ENCODE measurements at regions of chr1 and their contacts with region 1.

Region 1: GRCh38 chr1:110460253-110461220 is 9.6 kb downstream of the PROK1 start:
- DNase-seq: peak; percentile 23
- H3K4me3 ChIP-seq: no peak overlapping the region
- H3K27me3 ChIP-seq: no peaks in the 10 kb centered on the region; the same call in 1 of the 2 replicates
- CTCF ChIP-seq: peak; percentile 92

Region 2: DNA sequence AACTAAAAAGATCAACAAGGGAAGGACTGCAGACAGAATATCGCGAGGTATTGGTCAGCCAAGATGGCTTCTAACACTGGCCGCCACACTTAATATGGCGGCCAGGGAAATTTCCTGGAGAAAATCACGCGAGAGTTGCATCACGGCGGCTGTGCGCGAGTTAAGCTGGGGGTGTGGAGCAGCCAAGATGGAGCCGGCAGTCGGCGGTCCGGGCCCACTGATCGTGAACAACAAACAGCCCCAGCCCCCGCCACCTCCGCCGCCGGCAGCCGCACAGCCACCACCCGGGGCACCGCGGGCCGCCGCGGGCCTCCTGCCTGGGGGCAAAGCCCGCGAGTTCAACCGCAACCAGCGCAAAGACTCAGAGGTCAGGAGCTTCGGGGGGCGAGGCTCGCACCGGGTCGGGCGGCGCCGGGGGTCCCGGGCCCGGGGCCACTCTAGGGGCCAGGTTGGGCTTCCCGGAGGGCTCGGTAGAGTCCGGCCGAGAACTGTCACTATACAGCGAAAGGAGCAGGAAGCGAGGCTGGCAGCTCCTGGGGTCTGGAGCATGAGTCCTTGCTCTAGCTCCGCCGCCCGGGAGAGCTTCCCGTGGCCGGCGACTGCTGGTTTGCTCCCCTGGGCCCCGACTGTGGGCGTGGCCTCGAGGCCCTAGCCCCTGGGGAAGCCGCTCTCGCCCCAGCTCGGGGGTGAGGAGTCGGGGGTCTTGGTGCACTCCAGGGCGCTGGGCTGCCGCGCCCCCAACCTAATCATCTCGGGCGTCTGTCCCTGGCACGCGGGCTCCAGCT is 425.9 kb before region 1 on chr1 and contains the start of gene STRIP1:
- CTCF ChIA-PET with region 1: interaction called, 10 read pairs
- POLR2A ChIA-PET with region 1: no interaction called
- DNase-seq: peak; percentile 87
- H3K4me3 ChIP-seq: peak within 1 kb of the TSS; percentile 79
- H3K27me3 ChIP-seq: no peaks in the 10 kb centered on the region
- CTCF ChIP-seq: no peak
- polyA plus RNA-seq, gene STRIP1: 37.3 and 46.2 TPM in 2 replicates

Region 3: DNA sequence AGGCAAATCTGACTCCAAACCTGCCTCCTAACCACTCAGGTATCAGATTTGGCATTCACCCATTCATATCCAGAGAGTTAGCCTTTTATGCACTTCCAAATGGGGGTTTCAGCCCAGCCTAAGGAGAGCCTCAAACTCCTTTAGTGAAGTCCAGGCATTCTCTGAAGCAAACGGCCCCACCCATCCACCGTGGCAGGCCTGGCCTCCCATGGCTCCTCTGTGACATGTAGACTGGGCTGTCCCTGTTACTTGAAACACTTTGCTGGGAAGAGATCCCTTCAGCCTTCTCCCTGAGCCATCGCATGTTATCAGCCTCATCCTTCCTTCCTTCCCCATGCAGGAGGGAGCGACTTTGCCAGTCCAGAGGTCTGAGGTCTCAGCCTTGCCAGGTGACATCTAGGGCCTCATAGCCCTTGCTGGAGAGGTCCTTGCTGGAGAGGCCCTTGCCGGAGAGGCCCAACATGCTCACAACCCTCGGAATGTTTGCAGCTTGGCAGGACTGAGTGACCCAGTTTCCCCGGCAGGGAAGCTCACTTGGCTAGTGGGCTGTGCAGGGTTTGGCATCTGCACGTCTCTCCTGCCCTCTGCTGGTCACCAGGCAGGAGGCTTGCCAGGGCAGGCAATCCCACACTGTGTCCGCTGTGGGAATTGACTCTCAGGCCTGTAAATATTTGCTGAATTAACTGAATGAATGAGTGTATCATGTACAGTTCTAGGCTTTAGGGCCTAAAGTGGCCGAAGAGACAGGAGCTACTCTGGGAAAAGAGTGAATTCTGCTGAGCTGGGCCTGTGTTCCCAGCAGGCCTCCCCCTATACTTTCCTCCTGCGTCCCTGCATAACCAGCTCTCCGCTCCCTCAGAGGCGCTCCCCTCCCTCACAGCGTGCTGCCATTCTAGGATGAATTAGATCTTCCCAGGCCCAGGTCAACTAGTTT is 148.1 kb before region 1 on chr1:
- CTCF ChIA-PET with region 1: interaction called, 28 read pairs
- POLR2A ChIA-PET with region 1: no interaction called
- DNase-seq: peak; percentile 13
- H3K4me3 ChIP-seq: no peak overlapping the region
- H3K27me3 ChIP-seq: no peaks in the 10 kb centered on the region
- CTCF ChIP-seq: peak; percentile 97

Region 4: DNA sequence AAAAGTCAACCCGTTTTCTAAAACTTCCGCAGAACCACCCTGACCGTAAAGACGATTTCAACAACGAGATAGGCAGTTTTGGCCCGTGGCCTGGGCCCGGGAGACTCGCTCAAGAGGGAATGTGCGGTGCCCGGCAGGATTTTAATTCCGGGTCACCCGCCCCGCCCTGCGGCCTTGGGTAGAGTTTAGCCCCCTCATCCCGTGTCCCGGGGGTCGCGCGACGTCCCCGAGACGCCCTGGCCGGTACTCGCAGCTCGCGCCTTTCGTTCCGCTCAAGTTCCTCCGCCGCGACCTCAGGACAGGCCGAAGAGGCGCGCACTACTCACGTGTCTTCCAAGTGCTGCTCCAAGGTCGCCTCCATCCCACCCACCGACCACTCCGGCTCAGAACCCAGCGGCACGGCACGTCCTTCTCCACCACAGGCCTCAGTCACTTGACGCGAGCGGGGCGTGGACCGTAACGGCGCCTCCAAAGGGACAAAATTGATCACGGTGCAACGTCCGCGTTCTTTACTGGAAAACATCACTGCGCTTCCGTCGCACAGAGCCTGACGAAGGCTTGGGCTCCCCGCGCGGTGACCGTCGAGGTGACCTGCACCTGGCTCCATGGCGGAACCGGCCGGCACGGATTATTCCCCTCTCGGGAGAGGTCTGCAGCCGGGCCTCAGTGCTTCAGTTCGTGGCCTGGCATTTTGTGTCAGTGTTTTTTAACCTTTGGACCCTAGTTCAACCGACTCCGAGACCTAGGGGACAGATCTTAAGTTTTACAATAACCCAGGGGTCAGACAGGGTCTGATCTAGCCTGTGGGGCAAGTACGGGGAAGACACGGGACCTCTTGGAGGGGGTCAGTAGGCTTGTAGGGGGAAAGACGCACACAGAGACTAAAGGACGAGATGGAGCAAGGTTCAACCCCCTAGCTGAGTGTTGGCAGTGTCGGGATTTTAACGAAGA is 53.0 kb before region 1 on chr1 and contains the start of gene LAMTOR5:
- CTCF ChIA-PET with region 1: interaction called, 296 read pairs
- POLR2A ChIA-PET with region 1: no interaction called
- DNase-seq: peak; percentile 68
- H3K4me3 ChIP-seq: peak within 1 kb of the TSS; percentile 99
- H3K27me3 ChIP-seq: no peaks in the 10 kb centered on the region
- CTCF ChIP-seq: no peak
- polyA plus RNA-seq, gene LAMTOR5: 236 and 261 TPM in 2 replicates

Region 5: GRCh38 chr1:110440877-110441276 is 19.7 kb before region 1 on chr1:
- CTCF ChIA-PET with region 1: interaction called, 148 read pairs
- POLR2A ChIA-PET with region 1: no interaction called
- DNase-seq: no peak
- H3K4me3 ChIP-seq: no peak overlapping the region
- H3K27me3 ChIP-seq: peaks cover 1% of the 10 kb centered on the region
- CTCF ChIP-seq: no peak

Region 6: DNA sequence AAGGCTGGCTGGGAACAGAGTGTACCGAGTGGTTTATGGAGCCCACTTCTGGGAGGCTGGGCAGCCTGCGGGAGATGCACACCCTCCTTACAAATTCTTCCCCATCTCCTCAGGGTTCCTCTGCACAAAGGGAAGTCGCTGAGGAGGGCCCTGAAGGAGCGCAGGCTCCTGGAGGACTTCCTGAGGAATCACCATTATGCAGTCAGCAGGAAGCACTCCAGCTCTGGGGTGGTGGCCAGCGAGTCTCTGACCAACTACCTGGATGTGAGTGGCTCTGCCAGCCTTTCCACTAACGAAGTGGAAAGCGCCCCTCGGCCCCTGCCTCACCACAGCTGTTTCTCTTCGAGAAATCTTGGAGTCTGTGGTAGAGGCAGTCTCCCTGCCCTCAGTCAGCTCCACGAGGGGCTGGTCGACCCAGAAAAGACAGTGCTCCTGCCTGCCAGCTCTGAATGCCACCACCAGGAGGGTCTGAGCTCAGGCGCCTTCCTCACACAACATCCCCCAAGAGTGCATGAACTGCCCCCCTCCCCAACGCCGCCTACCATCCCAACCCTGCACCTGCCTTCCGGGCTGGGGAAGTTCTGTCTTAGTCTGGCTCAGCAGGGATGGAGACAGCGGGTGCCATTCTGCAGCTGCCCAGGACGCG is 22.2 kb after region 1 on chr1:
- CTCF ChIA-PET with region 1: interaction called, 13 read pairs
- POLR2A ChIA-PET with region 1: no interaction called
- DNase-seq: no peak
- H3K4me3 ChIP-seq: no peak overlapping the region
- H3K27me3 ChIP-seq: peaks cover 13% of the 10 kb centered on the region
- CTCF ChIP-seq: no peak

Region 7: GRCh38 chr1:110668549-110668948 is 208.0 kb after region 1 on chr1:
- CTCF ChIA-PET with region 1: no interaction called
- POLR2A ChIA-PET with region 1: no interaction called
- DNase-seq: no peak
- H3K4me3 ChIP-seq: no peak overlapping the region
- H3K27me3 ChIP-seq: peaks cover 6% of the 10 kb centered on the region
- CTCF ChIP-seq: no peak